Natural killer cell (primary cell): ENCODE measurements at regions of chr19 and their contacts with region 1.

Region 1: DNA sequence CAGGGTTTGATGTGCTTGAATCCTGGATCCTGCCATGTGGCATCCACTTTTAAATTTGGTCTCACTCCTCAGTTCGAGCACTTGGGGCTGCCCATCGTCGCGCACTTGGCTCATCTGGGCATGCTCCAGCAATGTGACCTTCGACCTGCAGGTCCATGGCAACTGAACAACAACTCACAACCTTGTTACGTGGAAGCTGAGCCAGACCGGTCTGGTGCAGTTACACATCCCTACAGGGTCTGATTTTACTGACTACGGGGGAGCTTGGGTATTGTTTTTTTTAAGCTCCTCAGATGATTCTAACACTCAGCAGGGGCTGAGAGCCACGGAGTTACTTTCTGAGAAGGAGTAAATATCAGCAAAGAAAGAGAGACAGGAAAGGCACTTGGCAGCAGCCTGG is 769.6 kb downstream of the UQCRFS1 start:
- DNase-seq: no peak
- ATAC-seq: no peak
- H3K4me3 ChIP-seq: no peak overlapping the region
- H3K4me3 Mint-ChIP-seq: no peak overlapping the region
- H3K27ac ChIP-seq: no peak overlapping the region
- H3K27ac Mint-ChIP-seq: no peak overlapping the region
- H3K4me1 ChIP-seq: no peaks in the 10 kb centered on the region
- H3K4me1 Mint-ChIP-seq: peaks cover 20% of the 10 kb centered on the region in 2 donors
- H3K27me3 ChIP-seq: no peaks in the 10 kb centered on the region
- H3K27me3 Mint-ChIP-seq: no peaks in the 10 kb centered on the region
- CTCF ChIP-seq: no peak

Region 2: DNA sequence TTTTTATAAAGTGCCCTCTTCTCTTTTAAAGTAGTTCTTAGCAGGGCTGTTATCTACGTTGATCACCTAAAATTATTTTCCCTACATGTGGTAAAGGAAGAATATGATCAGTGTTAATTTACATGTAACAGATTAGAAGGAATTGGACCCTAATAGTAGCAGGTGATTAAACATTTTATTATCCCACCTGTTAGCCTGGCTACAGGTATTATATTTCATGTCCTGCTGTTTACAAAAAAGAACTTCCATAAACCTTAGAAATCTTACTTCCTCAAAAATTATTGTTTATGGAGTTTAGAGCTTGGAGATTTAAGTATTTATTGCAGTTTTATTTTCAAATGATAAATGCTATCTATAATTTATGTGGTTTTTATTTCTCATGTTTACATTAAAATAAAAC is 457.1 kb before region 1 on chr19:
- intact Hi-C with region 1: loop called (anchors 10 kb)
- DNase-seq: no peak
- ATAC-seq: no peak
- H3K4me3 ChIP-seq: no peak overlapping the region
- H3K4me3 Mint-ChIP-seq: no peak overlapping the region
- H3K27ac ChIP-seq: no peak overlapping the region
- H3K27ac Mint-ChIP-seq: no peak overlapping the region
- H3K4me1 ChIP-seq: no peaks in the 10 kb centered on the region
- H3K4me1 Mint-ChIP-seq: no peaks in the 10 kb centered on the region
- H3K27me3 ChIP-seq: no peaks in the 10 kb centered on the region
- H3K27me3 Mint-ChIP-seq: peaks cover 4 to 13% of the 10 kb centered on the region in 2 donors
- CTCF ChIP-seq: no peak

Region 3: DNA sequence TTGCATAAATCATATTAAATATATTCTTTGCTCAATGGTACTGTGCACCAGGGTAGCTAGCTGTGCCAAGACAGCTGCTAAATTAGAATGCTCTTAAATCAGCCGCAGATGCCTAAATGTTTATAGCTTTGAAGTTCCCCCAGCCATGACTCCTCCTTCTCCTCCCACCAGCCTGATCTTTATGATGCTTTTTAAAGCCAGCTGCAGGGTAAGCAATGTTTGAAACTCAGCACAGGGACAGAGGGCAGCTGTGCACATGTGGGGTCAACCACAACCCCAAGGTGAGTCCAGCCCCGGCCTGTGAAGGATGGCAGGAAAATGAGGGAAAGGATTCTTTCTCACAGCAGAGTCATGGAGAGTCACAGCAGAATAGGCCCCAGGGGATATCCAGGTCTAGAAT is 133.9 kb after region 1 on chr19:
- intact Hi-C with region 1: no loop called
- DNase-seq: no peak
- ATAC-seq: no peak
- H3K4me3 ChIP-seq: no peak overlapping the region
- H3K4me3 Mint-ChIP-seq: no peak overlapping the region
- H3K27ac ChIP-seq: no peak overlapping the region
- H3K27ac Mint-ChIP-seq: peak overlapping the region in 1 of 2 donors; percentile 35
- H3K4me1 ChIP-seq: peaks cover 14% of the 10 kb centered on the region
- H3K4me1 Mint-ChIP-seq: peaks cover 45 to 50% of the 10 kb centered on the region in 2 donors
- H3K27me3 ChIP-seq: no peaks in the 10 kb centered on the region
- H3K27me3 Mint-ChIP-seq: no peaks in the 10 kb centered on the region
- CTCF ChIP-seq: no peak